GM13977 (cell line): ENCODE measurements at regions of chr2 and their contacts with region 1.

Region 1: GRCh38 chr2:106542811-106543259 is 55.7 kb downstream of the CD8B2 start:
- DNase-seq: peak; percentile 77
- CTCF ChIP-seq: peak; percentile 86

Region 2: DNA sequence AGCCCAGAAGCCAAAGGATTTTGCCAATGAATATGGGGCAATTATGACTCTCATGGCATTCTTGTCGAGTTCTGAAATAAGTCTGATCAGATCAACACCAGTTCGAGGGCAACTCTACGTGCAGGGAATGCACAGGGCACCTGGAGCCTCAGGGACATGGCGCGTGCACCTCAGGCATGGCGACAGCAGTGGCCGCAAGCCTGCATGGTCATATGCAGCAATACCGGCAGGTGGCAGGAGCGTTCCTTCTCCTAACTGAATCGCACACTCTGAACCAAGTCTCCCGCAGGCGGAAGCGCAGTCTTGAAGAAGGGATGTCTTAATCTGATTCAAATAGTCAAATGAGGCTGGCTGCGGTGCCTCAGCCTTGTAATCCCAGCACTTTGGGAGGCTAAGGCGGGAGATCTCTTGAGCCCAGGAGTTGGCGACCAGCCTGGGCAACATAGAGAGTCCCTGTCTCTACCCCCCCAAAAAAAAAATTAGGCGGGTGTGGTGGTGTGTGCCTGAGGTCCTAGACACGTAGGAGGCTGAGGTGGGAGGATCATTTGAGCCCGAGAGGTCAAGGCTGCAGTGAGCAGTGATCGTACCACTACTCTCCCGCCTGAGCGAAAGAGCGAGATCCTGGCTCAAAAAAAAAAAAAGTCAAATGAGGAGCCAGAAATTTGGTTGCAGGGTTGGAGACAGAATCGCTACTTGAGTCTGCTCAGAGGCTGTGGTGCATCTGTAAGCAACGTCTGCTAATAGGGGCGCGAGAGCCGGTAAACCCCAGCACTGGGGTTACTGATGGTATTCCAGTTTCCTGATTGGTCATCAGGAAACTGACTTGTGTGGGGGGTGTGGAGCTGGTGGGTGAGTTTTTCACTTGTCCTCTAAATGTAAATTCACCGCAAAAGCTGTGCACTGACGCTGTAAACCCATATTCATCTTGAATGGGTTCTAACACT is 1172.8 kb before region 1 on chr2:
- in situ Hi-C with region 1: loop called (anchors 25 kb)
- DNase-seq: peak; percentile 73
- CTCF ChIP-seq: peak; percentile 97

Region 3: GRCh38 chr2:106104332-106105062 is 438.3 kb before region 1 on chr2:
- in situ Hi-C with region 1: loop called (anchors 25 kb)
- DNase-seq: peak; percentile 78
- CTCF ChIP-seq: peak; percentile 92

Region 4: DNA sequence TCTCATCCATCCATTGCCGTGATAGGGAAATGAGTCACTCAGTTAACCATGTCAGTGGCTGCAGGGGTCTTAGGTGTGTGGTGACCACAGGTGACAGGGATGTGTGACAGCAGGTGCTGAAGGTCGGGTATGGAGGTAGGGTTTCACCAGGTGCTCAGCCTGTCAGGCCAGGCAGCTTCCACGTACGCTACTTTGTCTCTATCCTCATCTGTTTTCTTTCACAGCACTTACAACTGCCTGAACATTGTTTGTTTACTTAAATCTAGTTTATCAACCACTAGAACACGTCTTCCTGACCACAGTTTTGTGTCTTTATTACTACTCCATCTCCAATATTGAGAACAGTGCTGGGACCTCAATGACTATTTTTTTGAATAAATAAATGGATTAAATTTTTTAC is 337.3 kb before region 1 on chr2:
- in situ Hi-C with region 1: no loop called
- DNase-seq: no peak
- CTCF ChIP-seq: no peak